GM18951 (cell line): ENCODE measurements at regions of chr2 and their contacts with region 1.

Region 1: DNA sequence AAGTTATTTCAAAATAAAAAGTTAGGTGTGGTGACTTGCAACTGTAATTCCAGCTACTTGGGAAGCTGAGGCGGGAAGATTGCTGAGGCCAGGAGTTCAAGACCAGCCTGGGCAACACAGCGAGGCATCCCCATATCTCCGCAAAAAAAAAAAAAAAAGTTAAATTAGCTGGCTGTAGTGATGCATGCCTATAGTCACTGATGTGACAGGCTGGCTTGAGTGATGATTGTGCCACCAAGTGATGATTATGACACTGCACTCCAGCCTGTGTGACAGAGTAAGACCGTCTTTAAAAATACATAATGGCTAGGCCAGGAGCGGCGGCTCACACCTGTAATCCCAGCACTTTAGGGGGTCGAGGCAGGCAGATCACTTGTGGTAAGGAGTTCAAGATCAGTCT is 11.5 kb downstream of the SMPD4 start:
- POLR2A ChIP-seq: no peak

Region 2: GRCh38 chr2:131509615-131510014 is 1339.7 kb after region 1 on chr2:
- in situ Hi-C with region 1: loop called (anchors 5 kb)
- POLR2A ChIP-seq: no peak